Gastrocnemius medialis (tissue), 4 donors: ENCODE measurements at regions of chr7 and their contacts with region 1.

Region 1: DNA sequence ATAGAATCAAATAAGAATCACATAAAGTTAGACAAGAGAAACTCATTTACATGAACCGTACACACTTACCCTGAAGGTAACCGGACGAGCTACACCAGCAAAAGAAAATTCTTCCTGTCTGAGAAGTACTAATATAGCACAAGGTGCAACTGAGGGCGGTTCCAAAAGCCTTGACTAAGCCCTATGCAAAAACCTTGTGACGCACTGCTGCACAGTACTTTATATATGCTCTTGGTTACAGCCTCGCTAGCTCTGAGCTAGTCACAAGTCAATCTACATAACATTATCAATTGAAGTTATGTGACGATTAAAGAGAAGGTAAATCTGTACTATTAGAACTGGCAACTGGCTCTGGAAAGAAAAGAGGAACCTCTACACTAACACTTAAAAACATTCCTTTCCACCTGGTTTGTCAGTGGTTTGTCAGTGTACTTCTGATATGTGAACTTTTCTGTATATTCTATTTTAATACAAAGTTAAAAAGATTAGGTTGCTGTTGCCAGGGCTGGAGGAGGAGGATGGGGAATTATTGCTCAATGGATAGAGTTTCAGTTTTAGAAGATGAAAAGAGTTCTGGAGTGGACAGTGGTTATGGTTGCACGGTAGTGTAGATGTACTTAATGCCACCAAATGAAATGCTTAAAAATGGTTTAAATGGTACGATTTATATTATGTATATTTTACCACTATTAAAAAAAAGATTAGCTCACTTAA is 21.6 kb downstream of the NT5C3A start:
- DNase-seq: peak; percentile 73
- ATAC-seq: peak; percentile 90 to 91
- H3K4me3 ChIP-seq: peak overlapping the region; percentile 54 to 68 (median 62)
- H3K27ac ChIP-seq: peak overlapping the region; percentile 84 to 95 (median 90)
- H3K4me1 ChIP-seq: peaks cover 55 to 61% of the 10 kb centered on the region in 2 donors
- H3K27me3 ChIP-seq: no peaks in the 10 kb centered on the region
- CTCF ChIP-seq: no peak
- POLR2A ChIP-seq: peak; percentile 71 to 92

Region 2: GRCh38 chr7:32879460-32879859 is 161.5 kb before region 1 on chr7:
- in situ Hi-C with region 1: no loop called
- intact Hi-C with region 1: loop called (anchors 5 kb)
- DNase-seq: no peak
- ATAC-seq: peak; percentile 43 to 47
- H3K4me3 ChIP-seq: peak overlapping the region; percentile 15 to 34 (median 26)
- H3K27ac ChIP-seq: peak overlapping the region; percentile 78 to 95 (median 85)
- H3K4me1 ChIP-seq: peaks cover 94% of the 10 kb centered on the region in 2 donors
- H3K27me3 ChIP-seq: no peaks in the 10 kb centered on the region
- CTCF ChIP-seq: no peak
- POLR2A ChIP-seq: no peak

Region 3: GRCh38 chr7:32957326-32958045 is 83.5 kb before region 1 on chr7 and contains the start of gene FKBP9:
- in situ Hi-C with region 1: no loop called
- intact Hi-C with region 1: loop called (anchors 5 kb)
- DNase-seq: peak; percentile 59 to 68
- ATAC-seq: peak; percentile 83 to 84
- H3K4me3 ChIP-seq: peak within 1 kb of the TSS; percentile 72 to 97 (median 84)
- H3K27ac ChIP-seq: peak within 1 kb of the TSS; percentile 76 to 93 (median 88)
- H3K4me1 ChIP-seq: peaks cover 8 to 16% of the 10 kb centered on the region in 2 donors
- H3K27me3 ChIP-seq: no peaks in the 10 kb centered on the region
- CTCF ChIP-seq: no peak
- POLR2A ChIP-seq: peak; percentile 44 to 59
- total RNA-seq, gene FKBP9: 32.1 to 72.1 (median 35.3) TPM

Region 4: GRCh38 chr7:33072471-33072870 is 31.5 kb after region 1 on chr7:
- in situ Hi-C with region 1: no loop called
- intact Hi-C with region 1: no loop called
- DNase-seq: no peak
- ATAC-seq: peak in 1 of 2 donors; percentile 49
- H3K4me3 ChIP-seq: no peak overlapping the region
- H3K27ac ChIP-seq: no peak overlapping the region
- H3K4me1 ChIP-seq: peaks cover 10 to 14% of the 10 kb centered on the region in 2 donors
- H3K27me3 ChIP-seq: no peaks in the 10 kb centered on the region
- CTCF ChIP-seq: no peak
- POLR2A ChIP-seq: no peak